Activated T-helper 2 cell treated with anti-CD3 and anti-CD28 coated beads, Interferon-gamma antibody, Interleukin-2, Interleukin-4, amounts not matched to agents 10 μg/mL and 5 μg/mL and 100 μg/mL, durations not matched to agents 14 hours and 24 hours and 36 hours (primary cell): ENCODE measurements at regions of chr6 and their contacts with region 1.

Region 1: DNA sequence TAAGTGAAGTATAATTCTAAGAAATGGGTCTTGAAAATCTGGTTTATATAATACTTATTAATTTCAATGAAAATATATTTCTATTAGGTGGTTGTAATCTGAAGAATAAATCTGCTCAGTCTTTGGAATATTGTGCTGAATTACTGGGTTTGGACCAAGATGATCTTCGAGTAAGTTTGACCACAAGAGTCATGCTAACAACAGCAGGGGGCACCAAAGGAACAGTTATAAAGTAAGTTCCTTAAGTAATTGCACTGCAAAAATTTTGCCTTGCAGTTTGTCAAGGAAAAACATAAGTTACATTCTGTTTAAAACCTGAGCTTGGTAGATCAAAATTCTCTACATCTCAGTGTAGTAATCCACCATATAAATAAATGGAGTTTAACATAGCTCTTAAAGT is 106.0 kb downstream of the MYO6 start:
- DNase-seq: no peak
- H3K4me3 Mint-ChIP-seq: no peak overlapping the region
- H3K27ac Mint-ChIP-seq: no peak overlapping the region
- H3K4me1 Mint-ChIP-seq: no peaks in the 10 kb centered on the region
- H3K27me3 Mint-ChIP-seq: peaks cover 1% of the 10 kb centered on the region

Region 2: DNA sequence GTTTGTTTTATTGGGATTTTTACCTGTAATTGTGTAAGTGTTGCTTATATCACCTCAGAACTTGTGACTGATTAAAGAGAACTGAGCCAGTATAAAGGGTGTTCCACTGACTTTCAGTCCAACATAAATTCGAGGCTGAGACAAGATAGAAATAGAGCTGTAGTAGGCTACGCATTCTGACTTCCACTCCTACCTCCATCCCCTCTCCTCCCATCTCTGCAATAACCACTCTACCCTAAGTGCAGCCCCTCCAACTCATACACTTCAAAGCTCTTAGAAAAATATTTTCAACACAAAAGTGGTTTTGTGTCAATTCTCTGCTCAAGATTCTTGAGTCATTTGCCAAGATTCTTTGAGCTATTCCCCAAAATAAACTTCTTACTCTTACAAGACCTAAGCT is 410.2 kb before region 1 on chr6:
- intact Hi-C with region 1: loop called (anchors 5 kb)
- DNase-seq: no peak
- H3K4me3 Mint-ChIP-seq: no peak overlapping the region
- H3K27ac Mint-ChIP-seq: no peak overlapping the region
- H3K4me1 Mint-ChIP-seq: peaks cover 3% of the 10 kb centered on the region
- H3K27me3 Mint-ChIP-seq: peaks cover 5% of the 10 kb centered on the region